ENCODE measurements at regions of chr22 and their contacts with region 1.

Region 1: DNA sequence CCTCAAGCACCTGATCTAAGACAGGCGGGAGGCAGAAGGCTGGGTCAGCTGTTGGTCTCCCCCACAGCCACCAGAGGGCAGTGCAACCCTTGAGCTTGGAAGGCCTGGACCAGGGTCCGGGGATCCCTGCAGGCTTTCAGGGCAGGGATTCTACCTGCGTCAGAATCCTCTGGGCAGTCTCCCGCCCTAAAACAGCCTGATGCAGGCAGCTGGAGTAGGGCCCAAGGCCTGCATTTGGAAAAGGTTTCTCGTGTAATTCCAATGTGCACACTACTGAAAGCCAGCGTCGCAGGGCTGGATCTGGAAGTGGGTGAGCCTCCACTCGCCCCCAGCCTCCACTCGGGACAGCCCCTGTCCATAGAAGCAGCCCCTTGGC is 31.8 kb downstream of the BID start:
- DNase-seq: peak; percentile 95
- ATAC-seq: peak; percentile 91
- H3K4me3 Mint-ChIP-seq: no peak overlapping the region
- H3K27ac Mint-ChIP-seq: no peak overlapping the region; the same call in 1 of the 2 replicates
- H3K4me1 Mint-ChIP-seq: peaks cover 19% of the 10 kb centered on the region
- H3K27me3 Mint-ChIP-seq: no peaks in the 10 kb centered on the region
- CTCF ChIP-seq: peak; percentile 74

Region 2: DNA sequence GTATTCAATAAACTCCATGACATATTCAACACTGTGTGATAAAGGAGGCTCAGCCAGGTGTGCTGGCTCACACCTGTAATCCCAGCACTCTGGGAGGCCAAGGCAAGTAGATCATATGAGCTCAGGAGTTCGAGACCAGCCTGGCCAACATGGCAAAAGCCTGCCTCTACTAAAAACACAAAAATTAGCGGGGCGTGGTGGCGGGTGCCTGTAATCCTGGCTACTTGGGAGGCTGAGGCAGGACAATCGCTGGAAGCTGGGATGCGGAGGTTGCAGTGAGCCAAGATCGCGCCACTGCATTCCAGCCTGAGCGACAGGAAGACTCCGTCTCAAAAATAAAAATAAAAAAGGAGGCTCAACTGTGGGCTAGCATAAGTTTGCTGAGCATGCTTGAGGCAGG is 183.3 kb before region 1 on chr22:
- CTCF ChIA-PET with region 1: interaction called, 11 read pairs
- POLR2A ChIA-PET with region 1: no interaction called
- DNase-seq: no peak
- ATAC-seq: no peak
- H3K4me3 Mint-ChIP-seq: no peak overlapping the region
- H3K27ac Mint-ChIP-seq: no peak overlapping the region; the same call in 1 of the 2 replicates
- H3K4me1 Mint-ChIP-seq: peaks cover 20% of the 10 kb centered on the region
- H3K27me3 Mint-ChIP-seq: no peaks in the 10 kb centered on the region
- CTCF ChIP-seq: no peak

Region 3: DNA sequence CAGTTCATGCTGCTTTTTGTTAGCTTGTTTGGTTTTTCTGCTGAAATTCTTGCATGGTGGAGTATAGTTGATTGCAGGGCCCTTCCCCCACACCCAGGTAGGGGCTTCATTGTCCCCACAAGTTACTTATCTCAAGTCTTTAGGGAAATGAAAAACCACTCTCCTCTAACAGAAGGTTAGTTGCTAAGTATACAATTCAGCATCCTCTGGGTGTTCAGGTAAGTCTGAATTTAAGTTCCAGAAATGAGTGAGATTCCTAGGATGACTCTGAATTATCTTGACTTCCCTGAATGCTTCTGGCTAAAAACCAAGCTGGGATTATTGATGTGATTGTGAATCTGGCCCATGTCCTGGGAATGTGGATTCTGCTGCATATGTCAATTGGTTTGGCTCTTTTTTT is 63.6 kb before region 1 on chr22:
- CTCF ChIA-PET with region 1: no interaction called
- POLR2A ChIA-PET with region 1: no interaction called
- DNase-seq: no peak
- ATAC-seq: peak; percentile 67
- H3K4me3 Mint-ChIP-seq: no peak overlapping the region
- H3K27ac Mint-ChIP-seq: peak overlapping the region; percentile 88
- H3K4me1 Mint-ChIP-seq: peaks cover 19% of the 10 kb centered on the region
- H3K27me3 Mint-ChIP-seq: no peaks in the 10 kb centered on the region
- CTCF ChIP-seq: no peak

Region 4: DNA sequence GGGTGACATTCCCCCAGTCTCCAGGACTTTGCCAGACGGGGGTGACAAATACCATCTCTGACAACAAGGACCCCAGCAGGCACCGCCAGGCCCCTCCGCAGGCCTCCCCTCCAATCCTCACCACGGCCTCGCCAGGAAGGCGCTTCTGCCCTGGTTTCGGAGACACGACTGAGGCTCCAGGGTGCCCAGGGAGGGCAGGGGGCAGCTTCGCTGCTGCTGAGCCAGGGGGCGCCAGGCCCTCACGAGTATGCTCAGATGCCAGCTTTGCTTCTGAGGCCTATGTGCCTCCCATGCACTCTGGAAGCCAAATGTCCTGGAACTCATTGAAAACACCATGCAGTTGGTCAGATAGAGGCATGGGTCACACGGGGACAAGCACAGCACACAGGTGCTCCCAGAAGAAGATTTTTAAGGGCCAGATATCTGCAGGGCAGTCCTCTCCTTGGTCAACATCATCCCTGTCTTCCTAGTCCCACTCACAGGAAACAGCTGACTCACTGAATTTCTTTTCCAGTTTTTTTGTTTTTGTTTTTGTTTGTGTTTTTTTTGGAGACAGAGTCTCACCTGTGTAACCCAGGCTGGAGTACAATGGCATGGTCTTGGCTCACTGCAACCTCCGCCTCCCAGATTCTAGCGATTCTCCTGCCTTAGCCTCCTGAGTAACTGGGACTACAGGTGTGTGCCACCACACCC is 11.9 kb after region 1 on chr22:
- CTCF ChIA-PET with region 1: interaction called, 26 read pairs
- POLR2A ChIA-PET with region 1: no interaction called
- DNase-seq: peak; percentile 59
- ATAC-seq: peak; percentile 81
- H3K4me3 Mint-ChIP-seq: no peak overlapping the region
- H3K27ac Mint-ChIP-seq: no peak overlapping the region
- H3K4me1 Mint-ChIP-seq: no peaks in the 10 kb centered on the region
- H3K27me3 Mint-ChIP-seq: no peaks in the 10 kb centered on the region
- CTCF ChIP-seq: peak; percentile 37; the same call in 1 of the 2 replicates

Region 5: GRCh38 chr22:17773606-17774205 is 31.2 kb after region 1 on chr22:
- CTCF ChIA-PET with region 1: interaction called, 51 read pairs
- POLR2A ChIA-PET with region 1: interaction called, 3 read pairs
- DNase-seq: peak; percentile 73
- ATAC-seq: peak; percentile 78
- H3K4me3 Mint-ChIP-seq: peak overlapping the region; percentile 70
- H3K27ac Mint-ChIP-seq: no peak overlapping the region
- H3K4me1 Mint-ChIP-seq: peaks cover 20% of the 10 kb centered on the region
- H3K27me3 Mint-ChIP-seq: peaks cover 5% of the 10 kb centered on the region; the same call in 1 of the 2 replicates
- CTCF ChIP-seq: no peak

Region 6: DNA sequence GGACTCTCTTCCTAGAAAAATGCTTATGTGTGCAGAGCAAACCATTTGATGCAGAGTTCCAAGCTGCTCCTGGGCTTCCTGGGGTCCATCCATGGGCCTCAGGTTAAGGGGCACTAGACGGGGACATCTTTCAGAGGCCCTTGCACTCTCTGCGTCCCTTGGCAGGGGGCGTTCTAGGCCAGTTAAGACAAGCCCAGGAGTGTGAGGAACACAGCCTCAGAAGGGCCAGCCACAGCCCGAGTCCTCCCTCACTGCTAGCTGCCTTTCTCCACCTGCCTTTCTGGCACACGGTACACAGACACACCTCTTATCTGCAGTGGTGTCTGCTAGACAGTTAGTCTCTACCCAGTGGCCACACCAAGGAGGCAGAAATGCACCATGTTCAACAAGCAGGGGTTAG is 49.8 kb after region 1 on chr22:
- CTCF ChIA-PET with region 1: interaction called, 302 read pairs
- POLR2A ChIA-PET with region 1: no interaction called
- DNase-seq: peak; percentile 70
- ATAC-seq: peak; percentile 84
- H3K4me3 Mint-ChIP-seq: no peak overlapping the region
- H3K27ac Mint-ChIP-seq: no peak overlapping the region
- H3K4me1 Mint-ChIP-seq: peaks cover 1% of the 10 kb centered on the region; the same call in 1 of the 2 replicates
- H3K27me3 Mint-ChIP-seq: no peaks in the 10 kb centered on the region
- CTCF ChIP-seq: peak; percentile 24; the same call in 1 of the 2 replicates

Region 7: GRCh38 chr22:17891481-17892167 is 149.1 kb after region 1 on chr22:
- CTCF ChIA-PET with region 1: interaction called, 15 read pairs
- POLR2A ChIA-PET with region 1: no interaction called
- DNase-seq: peak; percentile 63
- ATAC-seq: peak; percentile 49
- H3K4me3 Mint-ChIP-seq: no peak overlapping the region
- H3K27ac Mint-ChIP-seq: no peak overlapping the region
- H3K4me1 Mint-ChIP-seq: no peaks in the 10 kb centered on the region
- H3K27me3 Mint-ChIP-seq: no peaks in the 10 kb centered on the region
- CTCF ChIP-seq: no peak